ENCODE measurements at regions of chr11 and their contacts with region 1.

Region 1: GRCh38 chr11:36296895-36297604 is 962 bp downstream of the PRR5L start:
- DNase-seq: no peak
- H3K4me3 ChIP-seq: no peak overlapping the region
- CTCF ChIP-seq: no peak
- POLR2A ChIP-seq: no peak

Region 2: GRCh38 chr11:36492724-36493304 is 195.8 kb after region 1 on chr11:
- intact Hi-C with region 1: loop called (anchors 5 kb)
- DNase-seq: no peak
- H3K4me3 ChIP-seq: no peak overlapping the region
- CTCF ChIP-seq: no peak
- POLR2A ChIP-seq: no peak

Measured in lower leg skin (tissue), 4 donors.